ENCODE measurements at regions of chr6 and their contacts with region 1.

Region 1: DNA sequence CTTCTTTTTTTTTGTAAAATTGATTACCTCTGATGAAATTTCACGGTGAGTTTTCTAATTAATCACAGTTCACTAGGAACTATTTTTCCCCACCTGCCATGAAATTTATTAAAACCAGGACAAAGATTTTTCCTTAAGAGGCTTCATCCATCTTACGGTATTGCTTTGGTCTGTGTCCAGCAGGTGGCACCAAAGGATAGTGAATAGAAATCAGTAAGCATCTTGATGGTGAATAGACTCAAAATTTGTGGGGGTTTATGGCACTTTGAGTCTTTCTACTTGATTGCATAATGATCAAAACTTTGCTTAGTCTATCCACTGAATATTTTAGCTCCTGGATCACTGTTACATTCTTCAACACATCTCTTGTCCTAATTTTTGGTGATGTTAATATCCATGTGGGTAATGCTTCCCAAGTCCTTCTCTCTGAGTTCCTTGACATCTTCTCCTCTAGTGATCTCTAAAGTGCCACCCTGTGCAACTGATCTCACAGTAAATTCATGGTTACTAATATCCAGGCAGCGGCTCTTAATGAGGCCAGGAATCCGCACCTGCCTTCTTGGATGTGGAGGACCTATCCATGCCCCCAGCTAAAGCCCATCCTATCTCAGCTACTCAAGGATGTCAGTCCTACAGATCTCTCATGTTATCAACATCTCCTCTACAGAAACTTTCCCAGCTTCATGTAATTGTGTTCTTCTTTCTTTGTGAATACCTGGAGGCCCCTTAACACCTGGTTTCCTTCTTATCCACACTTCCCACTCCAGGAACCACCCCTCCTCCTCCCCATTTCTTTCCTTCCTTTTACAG is 54.5 kb downstream of the STMND1 start:
- DNase-seq: peak in 1 of 2 donors; percentile 80
- H3K4me3 ChIP-seq: no peak overlapping the region
- H3K27ac ChIP-seq: no peak overlapping the region
- H3K4me1 ChIP-seq: no peaks in the 10 kb centered on the region
- H3K27me3 ChIP-seq: no peaks in the 10 kb centered on the region
- CTCF ChIP-seq: peak; percentile 73 to 83 (median 79)

Region 2: DNA sequence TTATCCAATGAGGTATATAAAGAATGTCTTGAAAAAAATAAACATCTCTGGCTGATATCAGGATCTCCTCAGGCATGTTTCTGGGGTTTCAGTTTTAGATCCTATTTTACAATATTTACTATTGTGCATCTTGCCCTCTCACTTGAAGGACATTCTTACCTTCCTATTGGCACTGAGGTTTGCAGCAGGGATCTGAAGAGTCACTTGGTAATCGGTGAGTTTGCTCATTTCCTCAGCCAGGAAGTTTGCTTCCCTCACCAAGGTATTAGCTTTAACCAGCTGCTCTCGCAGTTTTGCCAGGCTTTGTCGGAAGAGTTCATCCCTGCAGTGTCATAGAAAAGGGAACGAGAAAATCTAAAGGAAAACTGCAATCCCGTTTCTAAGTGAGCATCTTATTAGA is 652.3 kb after region 1 on chr6:
- intact Hi-C with region 1: loop called (anchors 2 kb)
- DNase-seq: no peak
- H3K4me3 ChIP-seq: no peak overlapping the region
- H3K27ac ChIP-seq: no peak overlapping the region
- H3K4me1 ChIP-seq: no peaks in the 10 kb centered on the region
- H3K27me3 ChIP-seq: no peaks in the 10 kb centered on the region
- CTCF ChIP-seq: no peak

Region 3: DNA sequence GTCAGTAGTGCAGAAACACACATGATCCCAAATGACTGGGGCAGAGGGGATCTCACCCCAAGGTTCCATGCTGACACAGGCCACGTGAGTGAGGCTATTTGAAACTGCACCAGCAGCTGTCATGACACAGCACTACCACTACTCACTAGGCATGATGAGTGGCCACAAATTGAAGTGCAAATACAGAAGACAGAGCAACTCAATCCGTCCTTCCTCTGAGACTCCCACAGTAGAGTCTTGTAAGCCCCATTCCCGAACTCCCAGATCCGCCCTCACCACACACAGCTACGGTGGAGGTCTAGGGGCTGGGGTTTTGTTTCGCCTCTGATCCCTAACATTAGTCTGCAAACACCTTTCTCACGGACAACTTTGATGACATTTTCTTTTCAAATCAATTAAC is 663.7 kb after region 1 on chr6:
- intact Hi-C with region 1: no loop called
- DNase-seq: no peak
- H3K4me3 ChIP-seq: no peak overlapping the region
- H3K27ac ChIP-seq: no peak overlapping the region
- H3K4me1 ChIP-seq: no peaks in the 10 kb centered on the region
- H3K27me3 ChIP-seq: no peaks in the 10 kb centered on the region
- CTCF ChIP-seq: no peak